ENCODE measurements at regions of chr15 and their contacts with region 1.

Region 1: GRCh38 chr15:68672781-68673205 is 94.0 kb downstream of the CORO2B start:
- DNase-seq: no peak
- ATAC-seq: no peak
- H3K4me3 ChIP-seq: no peak overlapping the region
- H3K4me3 Mint-ChIP-seq: no peak overlapping the region
- H3K27ac ChIP-seq: no peak overlapping the region
- H3K27ac Mint-ChIP-seq: no peak overlapping the region
- H3K4me1 ChIP-seq: peaks cover 2% of the 10 kb centered on the region
- H3K4me1 Mint-ChIP-seq: no peaks in the 10 kb centered on the region
- H3K27me3 ChIP-seq: peaks cover 0 to 13% of the 10 kb centered on the region in 2 experiments
- H3K27me3 Mint-ChIP-seq: peaks cover 16% of the 10 kb centered on the region
- CTCF ChIP-seq: no peak

Region 2: DNA sequence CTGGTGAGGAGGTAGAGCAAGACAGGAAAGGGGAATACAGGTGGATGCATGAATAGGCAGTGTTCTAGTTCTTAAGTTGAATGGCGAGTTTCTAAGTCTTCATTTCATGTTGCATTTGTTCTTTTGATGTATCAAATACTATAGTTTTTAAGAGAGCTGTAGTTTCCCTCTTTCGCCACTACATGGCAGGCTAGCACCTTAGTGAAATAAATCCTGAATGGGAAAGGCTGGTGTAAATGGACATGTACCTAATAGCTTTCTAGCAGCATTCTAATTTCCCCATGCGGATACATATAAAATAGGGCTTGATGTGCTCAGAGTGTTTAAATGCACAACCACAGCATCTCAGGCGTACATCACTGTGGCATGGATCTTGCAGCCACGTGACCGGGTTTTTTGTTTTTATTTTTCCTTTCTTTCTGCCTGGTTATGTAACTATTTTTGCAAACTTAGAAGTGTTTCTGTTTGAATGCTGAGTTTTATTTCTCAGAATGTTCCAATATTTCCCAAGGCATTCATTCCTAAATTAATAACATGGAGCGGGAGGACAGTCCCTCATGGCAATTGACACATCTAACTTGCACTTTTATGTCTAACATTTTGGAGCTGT is 419.8 kb before region 1 on chr15:
- CTCF ChIA-PET with region 1: interaction called, 10 read pairs
- POLR2A ChIA-PET with region 1: interaction called, 3 read pairs
- intact Hi-C with region 1: loop called (anchors 1 to 2 kb)
- DNase-seq: peak in 6 of 14 experiments; percentile 16 to 76 (median 60)
- ATAC-seq: peak; percentile 75
- H3K4me3 ChIP-seq: no peak overlapping the region
- H3K4me3 Mint-ChIP-seq: peak overlapping the region; percentile 44
- H3K27ac ChIP-seq: no peak overlapping the region
- H3K27ac Mint-ChIP-seq: no peak overlapping the region
- H3K4me1 ChIP-seq: peaks cover 9% of the 10 kb centered on the region
- H3K4me1 Mint-ChIP-seq: peaks cover 7% of the 10 kb centered on the region
- H3K27me3 ChIP-seq: no peaks in the 10 kb centered on the region
- H3K27me3 Mint-ChIP-seq: no peaks in the 10 kb centered on the region
- CTCF ChIP-seq: peak; percentile 89

Region 3: DNA sequence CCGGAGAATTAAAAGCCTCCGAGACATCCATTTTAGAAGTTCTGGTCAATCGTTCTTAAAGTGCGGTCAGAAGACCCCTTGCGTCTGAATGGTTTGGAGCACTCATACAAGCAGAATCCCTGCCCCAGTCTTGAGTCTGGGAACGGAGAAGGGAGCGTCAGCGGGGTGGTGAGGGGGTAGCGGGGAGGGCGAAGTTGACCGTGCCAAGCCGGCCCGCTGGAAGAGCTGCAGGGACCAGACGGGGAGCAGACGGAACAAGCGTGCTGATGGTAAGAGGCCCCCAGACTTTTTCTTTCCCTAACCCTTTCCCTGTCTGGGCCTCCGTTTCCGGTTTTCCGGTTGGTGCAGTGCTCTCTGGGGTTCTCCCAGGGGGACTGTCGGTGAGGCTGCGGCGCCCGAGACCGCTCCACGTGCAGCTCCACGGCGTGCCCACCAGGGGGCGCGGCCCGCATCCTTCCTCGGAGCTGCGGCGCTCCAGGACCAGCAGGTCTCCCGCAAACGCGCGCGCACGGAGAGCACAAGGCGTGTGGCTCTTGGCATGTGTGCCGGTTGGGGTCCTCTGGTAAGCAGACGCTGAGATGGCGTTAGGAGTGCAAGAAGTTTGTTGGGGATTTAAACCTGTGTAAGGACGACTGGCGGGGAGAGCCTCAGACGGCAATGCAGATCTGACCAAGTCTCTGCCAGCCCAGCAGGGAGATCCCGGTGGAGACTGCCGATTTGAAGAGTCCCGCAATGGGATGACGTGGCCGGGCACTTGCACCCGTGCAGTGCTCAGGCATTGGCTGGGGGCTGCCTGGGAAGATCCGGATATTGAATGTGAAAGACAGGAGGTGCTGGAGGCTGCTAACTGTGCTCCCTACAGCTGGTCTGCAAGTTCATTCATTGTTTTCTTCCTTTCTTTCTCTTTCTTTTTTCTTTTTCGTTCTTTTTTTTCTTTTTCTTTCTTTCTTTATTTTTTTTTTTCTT is 113.2 kb before region 1 on chr15:
- CTCF ChIA-PET with region 1: interaction called, 3 read pairs
- POLR2A ChIA-PET with region 1: no interaction called
- intact Hi-C with region 1: loop called (anchors 2 to 5 kb)
- DNase-seq: peak; percentile 48 to 85 (median 64)
- ATAC-seq: peak; percentile 93
- H3K4me3 ChIP-seq: peak overlapping the region; percentile 39
- H3K4me3 Mint-ChIP-seq: peak overlapping the region; percentile 75
- H3K27ac ChIP-seq: no peak overlapping the region
- H3K27ac Mint-ChIP-seq: no peak overlapping the region
- H3K4me1 ChIP-seq: peaks cover 17% of the 10 kb centered on the region
- H3K4me1 Mint-ChIP-seq: peaks cover 16% of the 10 kb centered on the region
- H3K27me3 ChIP-seq: peaks cover 24 to 28% of the 10 kb centered on the region in 2 experiments
- H3K27me3 Mint-ChIP-seq: peaks cover 63% of the 10 kb centered on the region
- CTCF ChIP-seq: peak; percentile 99

Region 4: GRCh38 chr15:69298697-69299441 is 626.1 kb after region 1 on chr15 and contains the start of gene PAQR5:
- CTCF ChIA-PET with region 1: no interaction called
- POLR2A ChIA-PET with region 1: no interaction called
- intact Hi-C with region 1: no loop called
- DNase-seq: peak in 1 of 14 experiments; percentile 5
- ATAC-seq: no peak
- H3K4me3 ChIP-seq: no peak within 1 kb of the TSS
- H3K4me3 Mint-ChIP-seq: peak within 1 kb of the TSS; percentile 58
- H3K27ac ChIP-seq: no peak within 1 kb of the TSS
- H3K27ac Mint-ChIP-seq: no peak within 1 kb of the TSS
- H3K4me1 ChIP-seq: peaks cover 4% of the 10 kb centered on the region
- H3K4me1 Mint-ChIP-seq: no peaks in the 10 kb centered on the region
- H3K27me3 ChIP-seq: peaks cover 42% of the 10 kb centered on the region in 2 experiments
- H3K27me3 Mint-ChIP-seq: peaks cover 82% of the 10 kb centered on the region
- CTCF ChIP-seq: no peak
- total RNA-seq, gene PAQR5: not detected

Region 5: GRCh38 chr15:69311319-69311721 is 638.5 kb after region 1 on chr15:
- CTCF ChIA-PET with region 1: no interaction called
- POLR2A ChIA-PET with region 1: no interaction called
- intact Hi-C with region 1: no loop called
- DNase-seq: no peak
- ATAC-seq: no peak
- H3K4me3 ChIP-seq: no peak overlapping the region
- H3K4me3 Mint-ChIP-seq: no peak overlapping the region
- H3K27ac ChIP-seq: no peak overlapping the region
- H3K27ac Mint-ChIP-seq: no peak overlapping the region
- H3K4me1 ChIP-seq: no peaks in the 10 kb centered on the region
- H3K4me1 Mint-ChIP-seq: no peaks in the 10 kb centered on the region
- H3K27me3 ChIP-seq: peaks cover 0 to 2% of the 10 kb centered on the region in 2 experiments
- H3K27me3 Mint-ChIP-seq: peaks cover 41% of the 10 kb centered on the region
- CTCF ChIP-seq: no peak

Measured in CD4-positive, alpha-beta T cell (primary cell).